ENCODE measurements at regions of chr21 and their contacts with region 1.

Region 1: DNA sequence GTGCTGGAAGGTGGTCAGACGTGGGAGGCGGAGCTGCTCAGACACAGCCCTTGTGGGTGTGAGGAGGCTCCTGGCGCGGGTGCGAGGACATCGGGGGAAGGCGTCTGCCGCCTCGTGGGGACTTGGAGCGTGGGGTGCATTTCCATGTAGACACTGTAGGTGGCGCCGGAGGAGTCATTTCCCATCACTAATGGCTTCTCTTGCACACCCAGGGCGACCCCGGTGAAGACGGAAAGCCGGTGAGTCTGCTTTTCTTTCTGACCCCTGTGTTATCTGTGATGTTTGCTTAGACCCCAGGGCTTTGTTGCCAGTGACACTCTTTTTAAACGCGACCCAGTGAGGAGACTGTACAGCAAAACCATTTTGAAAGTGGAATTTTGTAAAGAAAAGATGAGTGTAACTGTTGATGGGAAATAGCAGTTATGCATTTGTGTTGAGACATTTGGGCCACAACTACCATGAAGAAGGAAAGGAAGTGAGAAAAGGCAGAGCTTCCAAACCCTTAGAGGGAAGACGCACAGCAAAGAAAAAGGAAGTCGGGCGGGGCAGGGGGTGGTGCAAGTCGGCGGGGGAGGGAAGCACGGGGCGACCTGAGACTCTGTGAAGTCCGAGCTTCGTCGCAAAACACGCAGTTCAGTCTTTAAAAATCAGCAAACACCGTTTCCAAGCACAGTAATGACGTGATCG is 64.0 kb downstream of the SLC19A1 start:
- DNase-seq: peak; percentile 12
- ATAC-seq: peak; percentile 89
- H3K4me3 ChIP-seq: no peak overlapping the region
- H3K27ac ChIP-seq: no peak overlapping the region; the same call in 1 of the 2 replicates
- H3K4me1 ChIP-seq: no peaks in the 10 kb centered on the region
- H3K27me3 ChIP-seq: no peaks in the 10 kb centered on the region
- CTCF ChIP-seq: peak; percentile 43 to 69 (median 61); a peak in 5 of 6 replicates
- POLR2A ChIP-seq: no peak
- RAD21 ChIP-seq: peak; percentile 47

Region 2: GRCh38 chr21:45820171-45821091 is 342.2 kb after region 1 on chr21:
- CTCF ChIA-PET with region 1: no interaction called
- POLR2A ChIA-PET with region 1: no interaction called
- RAD21 ChIA-PET with region 1: no interaction called
- intact Hi-C with region 1: loop called (anchors 10 kb)
- DNase-seq: peak; percentile 75
- ATAC-seq: peak; percentile 92
- H3K4me3 ChIP-seq: no peak overlapping the region
- H3K27ac ChIP-seq: no peak overlapping the region; the same call in 1 of the 2 replicates
- H3K4me1 ChIP-seq: peaks cover 6 to 18% of the 10 kb centered on the region in 2 experiments; a peak in 3 of 4 replicates
- H3K27me3 ChIP-seq: no peaks in the 10 kb centered on the region; the same call in 1 of the 2 replicates
- CTCF ChIP-seq: peak; percentile 82 to 85 (median 84)
- POLR2A ChIP-seq: no peak
- RAD21 ChIP-seq: peak; percentile 90

Region 3: GRCh38 chr21:45923146-45923545 is 444.9 kb after region 1 on chr21:
- CTCF ChIA-PET with region 1: no interaction called
- POLR2A ChIA-PET with region 1: no interaction called
- RAD21 ChIA-PET with region 1: no interaction called
- intact Hi-C with region 1: no loop called
- DNase-seq: peak; percentile 16
- ATAC-seq: peak; percentile 95
- H3K4me3 ChIP-seq: no peak overlapping the region
- H3K27ac ChIP-seq: no peak overlapping the region
- H3K4me1 ChIP-seq: peaks cover 2 to 8% of the 10 kb centered on the region in 2 experiments; a peak in 3 of 4 replicates
- H3K27me3 ChIP-seq: no peaks in the 10 kb centered on the region
- CTCF ChIP-seq: peak; percentile 43 to 84 (median 81); a peak in 5 of 6 replicates
- POLR2A ChIP-seq: no peak
- RAD21 ChIP-seq: peak; percentile 65

Measured in HCT116 (cell line).